H1 (cell line): ENCODE measurements at regions of chr12 and their contacts with region 1.

Region 1: DNA sequence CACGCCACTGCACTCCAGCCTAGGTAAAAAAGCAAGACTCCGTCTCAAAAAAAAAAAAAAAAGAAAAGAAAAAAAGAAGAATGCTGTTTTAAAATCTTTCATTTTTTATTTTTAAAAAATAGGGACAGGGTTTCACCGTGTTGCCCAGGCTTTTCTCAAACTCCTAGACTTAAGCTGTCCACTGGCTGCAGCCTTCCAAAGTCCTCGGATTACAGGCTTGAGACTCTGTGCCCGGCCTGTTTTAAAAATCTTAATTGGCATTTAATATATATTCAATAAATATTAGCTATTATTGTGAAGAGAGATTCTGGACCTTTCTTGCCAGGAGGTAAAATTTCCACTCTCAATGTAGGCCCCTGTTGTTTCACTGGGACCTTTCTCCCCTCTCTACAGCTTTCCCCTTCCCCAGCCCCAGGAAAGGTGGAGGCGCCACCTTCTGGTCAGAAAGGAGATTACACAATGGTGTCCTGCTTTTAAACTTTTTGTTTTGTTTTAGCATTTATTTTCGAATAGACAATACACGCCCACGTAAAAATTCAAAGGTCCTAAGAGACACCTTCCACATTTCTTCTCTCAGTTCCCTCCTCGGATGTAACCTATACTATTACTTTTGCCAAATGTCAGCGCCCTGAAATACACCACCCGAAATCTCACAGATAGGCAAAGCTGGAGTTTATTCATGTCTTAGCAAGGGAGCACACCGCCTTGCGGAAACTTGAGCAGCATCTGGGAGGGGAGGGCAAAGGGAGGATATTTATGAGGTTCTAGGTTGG is 23.8 kb upstream of the PHC1 start:
- DNase-seq: peak in 1 of 2 experiments; percentile 80
- H3K4me3 ChIP-seq: peak overlapping the region; percentile 21 to 58 (median 32); a peak in 6 of 8 replicates
- H3K27ac ChIP-seq: no peak overlapping the region
- H3K4me1 ChIP-seq: peaks cover 0 to 5% (median 1%) of the 10 kb centered on the region in 4 experiments; a peak in 3 of 7 replicates
- H3K27me3 ChIP-seq: no peaks in the 10 kb centered on the region
- CTCF ChIP-seq: peak; percentile 62 to 65 (median 63)
- EP300 ChIP-seq: no peak
- POLR2A ChIP-seq: no peak
- RAD21 ChIP-seq: peak; percentile 78 to 79

Region 2: GRCh38 chr12:8658346-8658745 is 232.2 kb before region 1 on chr12:
- CTCF ChIA-PET with region 1: interaction called, 18 read pairs
- POLR2A ChIA-PET with region 1: no interaction called
- DNase-seq: no peak
- H3K4me3 ChIP-seq: no peak overlapping the region
- H3K27ac ChIP-seq: no peak overlapping the region
- H3K4me1 ChIP-seq: no peaks in the 10 kb centered on the region; a peak in 1 of 7 replicates
- H3K27me3 ChIP-seq: no peaks in the 10 kb centered on the region
- CTCF ChIP-seq: no peak
- EP300 ChIP-seq: no peak
- POLR2A ChIP-seq: no peak
- RAD21 ChIP-seq: no peak

Region 3: GRCh38 chr12:8780389-8780788 is 110.1 kb before region 1 on chr12:
- CTCF ChIA-PET with region 1: interaction called, 11 read pairs
- POLR2A ChIA-PET with region 1: no interaction called
- DNase-seq: no peak
- H3K4me3 ChIP-seq: no peak overlapping the region
- H3K27ac ChIP-seq: no peak overlapping the region
- H3K4me1 ChIP-seq: no peaks in the 10 kb centered on the region
- H3K27me3 ChIP-seq: no peaks in the 10 kb centered on the region
- CTCF ChIP-seq: peak in 2 of 3 experiments; percentile 44 to 58; a peak in 2 of 4 replicates
- EP300 ChIP-seq: no peak
- POLR2A ChIP-seq: no peak
- RAD21 ChIP-seq: peak; percentile 61 to 68

Region 4: GRCh38 chr12:8828540-8829518 is 61.7 kb before region 1 on chr12:
- CTCF ChIA-PET with region 1: interaction called, 22 read pairs
- POLR2A ChIA-PET with region 1: interaction called, 7 read pairs
- DNase-seq: no peak
- H3K4me3 ChIP-seq: no peak overlapping the region
- H3K27ac ChIP-seq: peak overlapping the region; percentile 36; the same call in 1 of the 2 replicates
- H3K4me1 ChIP-seq: peaks cover 3 to 14% (median 9%) of the 10 kb centered on the region in 4 experiments; a peak in 5 of 7 replicates
- H3K27me3 ChIP-seq: no peaks in the 10 kb centered on the region
- CTCF ChIP-seq: no peak
- EP300 ChIP-seq: no peak
- POLR2A ChIP-seq: no peak
- RAD21 ChIP-seq: no peak

Region 5: GRCh38 chr12:8870586-8870985 is 19.9 kb before region 1 on chr12:
- CTCF ChIA-PET with region 1: interaction called, 29 read pairs
- POLR2A ChIA-PET with region 1: interaction called, 4 read pairs
- DNase-seq: no peak
- H3K4me3 ChIP-seq: no peak overlapping the region
- H3K27ac ChIP-seq: no peak overlapping the region
- H3K4me1 ChIP-seq: no peaks in the 10 kb centered on the region
- H3K27me3 ChIP-seq: no peaks in the 10 kb centered on the region
- CTCF ChIP-seq: no peak
- EP300 ChIP-seq: no peak
- POLR2A ChIP-seq: no peak
- RAD21 ChIP-seq: no peak

Region 6: DNA sequence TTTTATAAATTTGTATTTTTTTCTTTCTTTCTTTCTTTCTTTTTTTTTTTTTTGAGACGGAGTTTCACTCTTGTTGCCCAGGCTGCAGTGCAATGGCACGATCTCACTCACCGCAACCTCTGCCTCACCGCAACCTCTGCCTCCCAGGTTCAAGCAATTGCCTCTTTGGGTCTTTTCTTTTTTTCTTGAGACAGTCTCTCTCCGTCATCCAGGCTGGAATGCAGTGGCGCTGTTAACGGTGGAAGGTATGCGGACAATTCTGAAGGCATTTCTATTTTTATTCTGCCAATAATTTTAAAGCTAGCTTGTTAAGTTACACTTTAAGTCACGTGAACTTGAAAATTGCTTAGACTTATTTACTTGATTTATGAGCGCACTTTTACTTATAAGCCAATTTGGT is 15.0 kb after region 1 on chr12:
- CTCF ChIA-PET with region 1: interaction called, 12 read pairs
- POLR2A ChIA-PET with region 1: interaction called, 16 read pairs
- DNase-seq: no peak
- H3K4me3 ChIP-seq: no peak overlapping the region
- H3K27ac ChIP-seq: no peak overlapping the region
- H3K4me1 ChIP-seq: peaks cover 4 to 25% (median 17%) of the 10 kb centered on the region in 4 experiments; a peak in 6 of 7 replicates
- H3K27me3 ChIP-seq: no peaks in the 10 kb centered on the region
- CTCF ChIP-seq: no peak
- EP300 ChIP-seq: no peak
- POLR2A ChIP-seq: no peak
- RAD21 ChIP-seq: no peak